CD8-positive, alpha-beta T cell (primary cell): ENCODE measurements at regions of chr9 and their contacts with region 1.

Region 1: DNA sequence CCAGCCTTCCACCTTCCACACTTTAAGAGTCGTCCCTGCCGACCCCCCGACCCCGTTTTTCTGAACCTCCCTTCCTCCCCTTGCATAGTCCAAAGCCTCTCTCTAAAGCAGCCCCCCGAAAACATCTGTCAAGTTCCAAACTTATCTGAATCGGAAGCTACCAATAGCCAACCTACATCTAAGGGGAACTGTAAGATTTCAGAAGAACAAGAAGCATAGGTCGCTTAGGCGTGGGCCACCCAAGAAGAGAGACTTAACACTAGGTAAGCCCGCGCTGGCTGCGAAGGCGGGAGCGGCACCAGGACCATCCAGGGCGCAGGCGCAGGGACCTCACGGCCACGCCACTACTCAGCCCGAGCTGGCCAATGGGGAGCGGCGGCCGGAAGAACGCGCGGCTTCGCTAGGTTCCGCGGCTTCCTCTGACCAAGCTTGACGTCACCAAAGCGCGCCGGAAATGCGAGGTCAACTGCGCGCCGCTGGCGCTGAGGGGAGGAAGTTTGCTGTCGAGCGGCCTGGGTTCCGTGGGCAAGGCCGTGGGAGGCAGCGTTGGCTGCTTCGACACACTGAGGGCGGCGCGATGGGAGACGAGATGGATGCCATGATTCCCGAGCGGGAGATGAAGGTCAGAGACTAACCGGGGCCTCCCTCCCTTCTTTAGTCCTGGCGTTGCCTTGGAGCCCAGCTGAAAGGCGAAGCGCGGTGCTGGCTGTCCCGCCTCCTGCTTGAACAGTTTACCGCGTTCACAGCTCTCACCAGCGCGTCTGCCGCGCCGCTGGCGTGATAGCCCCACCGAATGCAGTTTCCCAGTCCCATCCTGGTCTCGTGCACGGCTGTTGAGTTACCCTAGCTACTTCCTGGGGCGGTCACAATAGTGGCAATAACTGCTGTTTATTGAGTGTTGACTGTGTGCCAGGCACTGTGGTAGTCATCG is at the start of gene NUP214:
- DNase-seq: peak; percentile 99 to 100 (median 99)
- ATAC-seq: peak; percentile 97
- H3K4me3 ChIP-seq: peak within 1 kb of the TSS; percentile 83 to 95
- H3K4me3 Mint-ChIP-seq: peak within 1 kb of the TSS; percentile 99
- H3K27ac ChIP-seq: peak within 1 kb of the TSS; percentile 93 to 94
- H3K27ac Mint-ChIP-seq: peak within 1 kb of the TSS; percentile 99
- H3K4me1 ChIP-seq: peaks cover 16% of the 10 kb centered on the region
- H3K4me1 Mint-ChIP-seq: peaks cover 31% of the 10 kb centered on the region
- H3K27me3 ChIP-seq: no peaks in the 10 kb centered on the region
- H3K27me3 Mint-ChIP-seq: peaks cover 2% of the 10 kb centered on the region
- CTCF ChIP-seq: no peak
- total RNA-seq, gene NUP214: 120 to 136 TPM

Region 2: GRCh38 chr9:130712564-130713285 is 412.7 kb before region 1 on chr9:
- CTCF ChIA-PET with region 1: no interaction called
- POLR2A ChIA-PET with region 1: no interaction called
- intact Hi-C with region 1: loop called (anchors 1 to 5 kb)
- DNase-seq: peak; percentile 87 to 97 (median 95)
- ATAC-seq: peak; percentile 96
- H3K4me3 ChIP-seq: peak overlapping the region; percentile 81 to 92
- H3K4me3 Mint-ChIP-seq: peak overlapping the region; percentile 92
- H3K27ac ChIP-seq: peak overlapping the region; percentile 87 to 97
- H3K27ac Mint-ChIP-seq: peak overlapping the region; percentile 94
- H3K4me1 ChIP-seq: peaks cover 31% of the 10 kb centered on the region
- H3K4me1 Mint-ChIP-seq: peaks cover 36% of the 10 kb centered on the region
- H3K27me3 ChIP-seq: no peaks in the 10 kb centered on the region
- H3K27me3 Mint-ChIP-seq: no peaks in the 10 kb centered on the region
- CTCF ChIP-seq: no peak

Region 3: GRCh38 chr9:131530920-131531832 is 405.8 kb after region 1 on chr9 and contains the start of gene UCK1:
- CTCF ChIA-PET with region 1: no interaction called
- POLR2A ChIA-PET with region 1: no interaction called
- intact Hi-C with region 1: loop called in 1 of 2 experiments (anchors 1 kb)
- DNase-seq: peak; percentile 42 to 89 (median 68)
- ATAC-seq: peak; percentile 91
- H3K4me3 ChIP-seq: peak within 1 kb of the TSS; percentile 64 to 73
- H3K4me3 Mint-ChIP-seq: peak within 1 kb of the TSS; percentile 74
- H3K27ac ChIP-seq: peak within 1 kb of the TSS; percentile 51 to 53
- H3K27ac Mint-ChIP-seq: peak within 1 kb of the TSS; percentile 55
- H3K4me1 ChIP-seq: peaks cover 35% of the 10 kb centered on the region
- H3K4me1 Mint-ChIP-seq: peaks cover 35% of the 10 kb centered on the region
- H3K27me3 ChIP-seq: no peaks in the 10 kb centered on the region
- H3K27me3 Mint-ChIP-seq: no peaks in the 10 kb centered on the region
- CTCF ChIP-seq: no peak
- total RNA-seq, gene UCK1: 22.6 to 24.7 TPM

Region 4: GRCh38 chr9:132354637-132355355 is 1229.4 kb after region 1 on chr9 and contains the start of gene SETX:
- CTCF ChIA-PET with region 1: no interaction called
- POLR2A ChIA-PET with region 1: interaction called, 5 read pairs
- intact Hi-C with region 1: loop called in 1 of 2 experiments (anchors 10 kb)
- DNase-seq: peak; percentile 92 to 99 (median 97)
- ATAC-seq: peak; percentile 83
- H3K4me3 ChIP-seq: peak within 1 kb of the TSS; percentile 77 to 86
- H3K4me3 Mint-ChIP-seq: peak within 1 kb of the TSS; percentile 87
- H3K27ac ChIP-seq: peak within 1 kb of the TSS; percentile 94 to 97
- H3K27ac Mint-ChIP-seq: peak within 1 kb of the TSS; percentile 98
- H3K4me1 ChIP-seq: peaks cover 40% of the 10 kb centered on the region
- H3K4me1 Mint-ChIP-seq: peaks cover 44% of the 10 kb centered on the region
- H3K27me3 ChIP-seq: no peaks in the 10 kb centered on the region
- H3K27me3 Mint-ChIP-seq: no peaks in the 10 kb centered on the region
- CTCF ChIP-seq: no peak
- total RNA-seq, gene SETX: 37.5 to 40.7 TPM